CD8-positive, alpha-beta T cell (primary cell): ENCODE measurements at regions of chr15 and their contacts with region 1.

Region 1: DNA sequence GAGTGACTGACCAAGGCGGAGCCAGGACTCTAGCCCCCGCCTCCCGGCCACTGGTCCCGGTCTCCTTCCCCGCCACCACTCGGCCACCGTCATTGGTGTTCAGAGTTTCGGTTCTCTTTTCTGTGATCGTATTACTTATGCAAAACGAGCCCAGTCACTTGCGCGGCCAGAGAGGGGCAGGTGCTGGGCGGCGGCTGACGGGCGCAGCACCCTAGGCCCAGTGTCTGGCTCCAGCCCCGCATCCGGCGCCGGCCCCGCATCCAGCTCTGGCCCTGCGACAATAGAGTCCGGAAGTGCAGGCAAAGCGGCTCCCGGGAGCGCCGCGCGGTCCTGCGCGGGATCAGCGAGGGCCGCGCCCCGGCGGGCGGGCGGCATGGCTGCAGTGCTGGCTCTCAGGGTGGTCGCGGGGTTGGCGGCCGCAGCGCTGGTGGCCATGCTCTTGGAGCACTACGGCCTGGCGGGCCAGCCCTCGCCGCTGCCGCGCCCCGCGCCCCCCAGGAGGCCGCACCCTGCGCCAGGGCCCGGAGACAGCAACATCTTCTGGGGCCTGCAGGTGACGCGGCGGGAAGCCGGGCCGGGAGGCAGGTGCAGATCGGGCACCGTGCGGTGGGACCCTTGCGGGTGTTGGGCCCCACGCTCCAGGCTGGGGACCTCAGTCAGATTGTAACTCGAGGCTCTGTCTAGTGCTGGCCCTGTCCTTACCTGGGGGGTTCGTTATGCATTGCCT is at the start of gene TMEM62:
- DNase-seq: peak; percentile 20 to 78 (median 60)
- ATAC-seq: peak; percentile 76
- H3K4me3 ChIP-seq: peak within 1 kb of the TSS; percentile 80 to 83
- H3K4me3 Mint-ChIP-seq: peak within 1 kb of the TSS; percentile 94
- H3K27ac ChIP-seq: peak within 1 kb of the TSS; percentile 66 to 87
- H3K27ac Mint-ChIP-seq: peak within 1 kb of the TSS; percentile 86
- H3K4me1 ChIP-seq: peaks cover 9% of the 10 kb centered on the region
- H3K4me1 Mint-ChIP-seq: peaks cover 21% of the 10 kb centered on the region
- H3K27me3 ChIP-seq: no peaks in the 10 kb centered on the region
- H3K27me3 Mint-ChIP-seq: no peaks in the 10 kb centered on the region
- CTCF ChIP-seq: no peak
- total RNA-seq, gene TMEM62: 23.0 to 25.5 TPM

Region 2: GRCh38 chr15:42490671-42491544 is 642.7 kb before region 1 on chr15 and contains the start of gene ZNF106:
- CTCF ChIA-PET with region 1: no interaction called
- POLR2A ChIA-PET with region 1: no interaction called
- intact Hi-C with region 1: no loop called
- DNase-seq: peak; percentile 71 to 95 (median 85)
- ATAC-seq: peak; percentile 55
- H3K4me3 ChIP-seq: peak within 1 kb of the TSS; percentile 88 to 95
- H3K4me3 Mint-ChIP-seq: peak within 1 kb of the TSS; percentile 100
- H3K27ac ChIP-seq: peak within 1 kb of the TSS; percentile 79 to 95
- H3K27ac Mint-ChIP-seq: peak within 1 kb of the TSS; percentile 100
- H3K4me1 ChIP-seq: peaks cover 36% of the 10 kb centered on the region
- H3K4me1 Mint-ChIP-seq: peaks cover 59% of the 10 kb centered on the region
- H3K27me3 ChIP-seq: no peaks in the 10 kb centered on the region
- H3K27me3 Mint-ChIP-seq: no peaks in the 10 kb centered on the region
- CTCF ChIP-seq: no peak
- total RNA-seq, gene ZNF106: 28.1 to 28.4 TPM

Region 3: GRCh38 chr15:43095243-43095642 is 38.4 kb before region 1 on chr15:
- CTCF ChIA-PET with region 1: interaction called, 3 read pairs
- POLR2A ChIA-PET with region 1: no interaction called
- intact Hi-C with region 1: loop called in 1 of 2 experiments (anchors 5 kb)
- DNase-seq: no peak
- ATAC-seq: no peak
- H3K4me3 ChIP-seq: no peak overlapping the region
- H3K4me3 Mint-ChIP-seq: no peak overlapping the region
- H3K27ac ChIP-seq: no peak overlapping the region
- H3K27ac Mint-ChIP-seq: no peak overlapping the region
- H3K4me1 ChIP-seq: no peaks in the 10 kb centered on the region
- H3K4me1 Mint-ChIP-seq: peaks cover 61% of the 10 kb centered on the region
- H3K27me3 ChIP-seq: no peaks in the 10 kb centered on the region
- H3K27me3 Mint-ChIP-seq: no peaks in the 10 kb centered on the region
- CTCF ChIP-seq: no peak

Region 4: DNA sequence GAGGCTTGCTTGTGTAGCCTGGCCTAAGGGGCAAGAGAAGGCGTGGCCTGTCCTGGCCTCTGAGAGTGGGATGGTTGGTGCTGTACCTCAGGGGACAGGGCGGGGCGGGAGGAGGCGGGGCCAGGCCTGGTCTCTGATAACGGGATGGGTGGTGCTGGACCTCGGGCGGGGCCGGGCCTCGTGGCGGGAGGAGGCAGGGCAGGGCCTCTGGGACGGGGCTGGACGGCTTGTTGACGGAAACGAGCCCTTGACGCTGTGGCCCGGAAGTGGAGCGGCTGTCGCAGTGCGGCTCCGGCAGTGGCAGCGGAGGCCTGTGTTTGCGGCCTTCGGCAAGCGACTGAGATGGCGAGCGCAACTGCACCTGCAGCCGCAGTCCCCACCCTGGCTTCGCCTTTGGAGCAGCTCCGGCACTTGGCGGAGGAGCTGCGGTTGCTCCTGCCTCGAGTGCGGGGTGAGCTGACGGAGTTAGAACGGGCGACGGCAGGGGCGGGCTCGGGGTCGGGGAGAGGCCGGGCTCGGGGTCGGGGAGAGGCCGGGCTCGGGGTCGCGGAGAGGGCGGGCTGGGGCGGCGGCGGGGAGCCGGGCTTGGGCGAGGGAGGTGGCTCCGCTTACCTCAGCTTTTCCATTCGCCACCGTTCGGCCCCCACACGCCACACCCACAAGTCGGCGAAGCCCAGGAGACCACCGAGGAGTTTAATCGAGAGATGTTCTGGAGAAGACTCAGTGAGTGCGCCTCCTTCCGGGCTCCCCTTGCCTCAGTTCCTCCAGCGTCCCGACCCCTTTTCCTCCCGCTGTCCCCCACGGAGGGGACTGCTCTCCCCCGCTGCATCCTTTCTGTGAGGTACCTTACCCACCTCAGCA is 51.8 kb after region 1 on chr15 and contains the start of gene CCNDBP1:
- CTCF ChIA-PET with region 1: no interaction called
- POLR2A ChIA-PET with region 1: no interaction called
- intact Hi-C with region 1: loop called in 1 of 2 experiments (anchors 2 kb)
- DNase-seq: peak; percentile 73 to 93 (median 86)
- ATAC-seq: peak; percentile 75
- H3K4me3 ChIP-seq: peak within 1 kb of the TSS; percentile 82 to 97
- H3K4me3 Mint-ChIP-seq: peak within 1 kb of the TSS; percentile 97
- H3K27ac ChIP-seq: peak within 1 kb of the TSS; percentile 87 to 91
- H3K27ac Mint-ChIP-seq: peak within 1 kb of the TSS; percentile 98
- H3K4me1 ChIP-seq: peaks cover 18% of the 10 kb centered on the region
- H3K4me1 Mint-ChIP-seq: peaks cover 43% of the 10 kb centered on the region
- H3K27me3 ChIP-seq: no peaks in the 10 kb centered on the region
- H3K27me3 Mint-ChIP-seq: no peaks in the 10 kb centered on the region
- CTCF ChIP-seq: peak; percentile 56
- total RNA-seq, gene CCNDBP1: 80.3 to 81.1 TPM